Cardiac septum (tissue), 1 donor: ENCODE measurements at regions of chr4 and their contacts with region 1.

Region 1: DNA sequence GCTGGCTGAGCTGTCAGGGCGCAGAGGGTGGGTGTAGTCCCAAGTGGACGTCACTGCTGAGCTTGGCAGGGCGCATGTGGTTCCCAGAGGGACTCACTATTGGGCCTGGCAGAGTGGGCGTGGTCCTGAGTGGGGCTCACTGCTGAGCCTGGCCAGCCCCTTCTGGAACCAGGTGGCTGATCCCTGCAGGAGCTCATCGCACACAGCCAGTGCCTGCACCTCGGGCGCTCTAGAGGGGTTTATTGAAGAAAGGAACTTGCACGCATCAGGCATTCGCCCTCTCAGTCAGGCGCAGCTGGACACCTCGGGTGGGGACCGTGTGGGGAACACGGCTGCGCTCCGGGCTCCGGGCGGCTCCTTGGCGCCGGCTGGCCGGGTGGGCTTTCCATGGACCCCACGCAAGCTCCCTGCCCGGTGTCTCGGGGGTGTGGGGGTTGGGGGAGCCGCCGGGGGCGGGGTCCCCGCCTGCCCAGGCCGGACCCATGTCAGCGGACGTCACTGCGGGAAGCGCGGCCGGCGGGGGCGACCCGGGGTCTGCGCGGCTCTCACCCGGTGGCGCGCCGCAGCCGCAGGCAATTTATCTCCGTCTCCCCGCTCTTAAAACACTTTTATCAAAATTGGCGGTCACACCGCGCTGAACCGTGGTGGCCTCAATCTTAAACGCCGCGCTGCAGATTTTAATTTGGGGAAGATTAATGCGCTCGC is 65.4 kb upstream of the NKX1-1 start:
- DNase-seq: peak; percentile 70

Region 2: GRCh38 chr4:1370321-1371124 is 101.1 kb before region 1 on chr4:
- intact Hi-C with region 1: loop called (anchors 5 kb)
- DNase-seq: peak; percentile 69

Region 3: GRCh38 chr4:1419708-1420107 is 51.9 kb before region 1 on chr4:
- intact Hi-C with region 1: no loop called
- DNase-seq: peak; percentile 24